ENCODE measurements at regions of chr12 and their contacts with region 1.

Region 1: GRCh38 chr12:68223083-68223747 is 2.4 kb downstream of the IL26 start:
- DNase-seq: peak; percentile 65 to 67
- ATAC-seq: peak; percentile 96 to 99
- H3K4me3 ChIP-seq: peak overlapping the region in 3 of 4 donors; percentile 4 to 17 (median 6)
- H3K27ac ChIP-seq: no peak overlapping the region
- H3K4me1 ChIP-seq: peaks cover 4 to 8% of the 10 kb centered on the region in 2 donors
- H3K27me3 ChIP-seq: no peaks in the 10 kb centered on the region
- CTCF ChIP-seq: peak; percentile 60 to 86 (median 81)
- POLR2A ChIP-seq: no peak

Region 2: GRCh38 chr12:68294251-68294650 is 71.0 kb after region 1 on chr12:
- in situ Hi-C with region 1: no loop called
- intact Hi-C with region 1: no loop called
- DNase-seq: no peak
- ATAC-seq: no peak
- H3K4me3 ChIP-seq: no peak overlapping the region
- H3K27ac ChIP-seq: no peak overlapping the region
- H3K4me1 ChIP-seq: peaks cover 11 to 13% of the 10 kb centered on the region in 2 donors
- H3K27me3 ChIP-seq: no peaks in the 10 kb centered on the region
- CTCF ChIP-seq: no peak
- POLR2A ChIP-seq: no peak

Region 3: DNA sequence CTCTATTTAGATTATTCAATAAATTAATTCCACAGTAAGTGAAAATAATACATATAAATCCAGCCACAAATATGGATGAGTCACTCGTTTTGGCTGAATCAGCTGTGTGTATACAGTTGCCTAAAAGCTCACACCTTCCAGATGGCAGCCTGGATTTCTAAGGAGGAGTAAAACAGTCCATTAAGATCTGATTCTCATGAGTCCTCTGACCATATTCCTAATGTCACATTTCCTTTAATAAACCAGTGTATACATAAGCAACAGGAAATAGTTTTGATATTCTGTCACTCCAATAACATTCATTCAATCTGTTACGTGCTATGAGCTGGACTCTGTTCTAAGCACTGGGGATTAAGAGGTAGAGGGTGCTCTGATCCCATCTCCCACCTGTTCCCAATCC is 87.2 kb after region 1 on chr12:
- in situ Hi-C with region 1: loop called in 3 of 4 experiments (anchors 5 to 10 kb)
- intact Hi-C with region 1: no loop called
- DNase-seq: no peak
- ATAC-seq: no peak
- H3K4me3 ChIP-seq: no peak overlapping the region
- H3K27ac ChIP-seq: no peak overlapping the region
- H3K4me1 ChIP-seq: no peaks in the 10 kb centered on the region
- H3K27me3 ChIP-seq: no peaks in the 10 kb centered on the region
- CTCF ChIP-seq: no peak
- POLR2A ChIP-seq: no peak

Region 4: GRCh38 chr12:68317047-68317667 is 93.9 kb after region 1 on chr12:
- in situ Hi-C with region 1: loop called in 3 of 4 experiments (anchors 5 to 10 kb)
- intact Hi-C with region 1: loop called (anchors 1 kb)
- DNase-seq: no peak
- ATAC-seq: no peak
- H3K4me3 ChIP-seq: no peak overlapping the region
- H3K27ac ChIP-seq: no peak overlapping the region
- H3K4me1 ChIP-seq: peaks cover 0 to 20% of the 10 kb centered on the region in 2 donors
- H3K27me3 ChIP-seq: no peaks in the 10 kb centered on the region
- CTCF ChIP-seq: peak; percentile 23 to 70 (median 52)
- POLR2A ChIP-seq: no peak

Region 5: DNA sequence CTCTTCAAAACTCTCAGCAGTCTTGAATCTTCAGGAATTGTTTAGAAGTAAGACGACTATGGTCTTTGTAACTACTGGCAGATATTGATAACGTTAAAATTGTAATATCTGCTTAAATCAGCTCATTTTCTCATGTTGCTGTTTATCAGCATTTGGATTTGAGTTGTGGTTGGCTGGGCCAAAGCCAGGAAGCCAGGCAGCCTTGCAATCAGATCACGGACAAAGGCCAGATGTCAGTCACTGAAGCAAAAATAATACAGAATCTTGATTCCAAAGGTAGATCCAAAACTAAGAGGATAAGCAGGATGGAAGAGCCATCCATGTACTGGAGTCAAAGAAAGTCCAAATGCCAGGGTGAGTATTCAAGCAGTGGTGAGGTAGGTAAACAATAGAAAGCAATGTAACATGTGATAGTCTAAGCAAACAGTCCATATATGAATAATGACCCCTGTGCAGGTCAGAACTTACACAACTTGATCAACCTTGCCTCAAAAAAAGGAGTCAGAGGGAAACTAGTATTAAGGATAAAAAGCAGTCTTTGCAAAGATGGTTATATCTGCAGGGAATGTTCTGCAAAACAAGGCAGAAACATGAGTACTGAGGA is 291.7 kb after region 1 on chr12:
- in situ Hi-C with region 1: no loop called
- intact Hi-C with region 1: no loop called
- DNase-seq: no peak
- ATAC-seq: no peak
- H3K4me3 ChIP-seq: no peak overlapping the region
- H3K27ac ChIP-seq: no peak overlapping the region
- H3K4me1 ChIP-seq: no peaks in the 10 kb centered on the region
- H3K27me3 ChIP-seq: no peaks in the 10 kb centered on the region
- CTCF ChIP-seq: no peak
- POLR2A ChIP-seq: no peak

Region 6: GRCh38 chr12:68665016-68665569 is 441.9 kb after region 1 on chr12:
- in situ Hi-C with region 1: loop called in 1 of 4 experiments (anchors 25 kb)
- intact Hi-C with region 1: no loop called
- DNase-seq: no peak
- ATAC-seq: peak in 1 of 2 donors; percentile 64
- H3K4me3 ChIP-seq: no peak overlapping the region
- H3K27ac ChIP-seq: no peak overlapping the region
- H3K4me1 ChIP-seq: peaks cover 0 to 8% of the 10 kb centered on the region in 2 donors
- H3K27me3 ChIP-seq: no peaks in the 10 kb centered on the region
- CTCF ChIP-seq: no peak
- POLR2A ChIP-seq: no peak